Dendritic cell treated with granulocyte-macrophage colony-stimulating factor and Interleukin-4, amounts not matched to agents 40 ng/mL and 50 ng/mL, for 4 days (primary cell): ENCODE measurements at regions of chr1 and their contacts with region 1.

Region 1: GRCh38 chr1:155084722-155085503 is 6.3 kb downstream of the EFNA3 start:
- H3K4me3 Mint-ChIP-seq: peak overlapping the region; percentile 96
- H3K27ac Mint-ChIP-seq: peak overlapping the region; percentile 98
- H3K4me1 Mint-ChIP-seq: peaks cover 59% of the 10 kb centered on the region
- H3K27me3 Mint-ChIP-seq: peaks cover 50% of the 10 kb centered on the region

Region 2: GRCh38 chr1:154639876-154640275 is 445.0 kb before region 1 on chr1:
- intact Hi-C with region 1: no loop called
- H3K4me3 Mint-ChIP-seq: no peak overlapping the region
- H3K27ac Mint-ChIP-seq: no peak overlapping the region
- H3K4me1 Mint-ChIP-seq: no peaks in the 10 kb centered on the region
- H3K27me3 Mint-ChIP-seq: peaks cover 17% of the 10 kb centered on the region

Region 3: DNA sequence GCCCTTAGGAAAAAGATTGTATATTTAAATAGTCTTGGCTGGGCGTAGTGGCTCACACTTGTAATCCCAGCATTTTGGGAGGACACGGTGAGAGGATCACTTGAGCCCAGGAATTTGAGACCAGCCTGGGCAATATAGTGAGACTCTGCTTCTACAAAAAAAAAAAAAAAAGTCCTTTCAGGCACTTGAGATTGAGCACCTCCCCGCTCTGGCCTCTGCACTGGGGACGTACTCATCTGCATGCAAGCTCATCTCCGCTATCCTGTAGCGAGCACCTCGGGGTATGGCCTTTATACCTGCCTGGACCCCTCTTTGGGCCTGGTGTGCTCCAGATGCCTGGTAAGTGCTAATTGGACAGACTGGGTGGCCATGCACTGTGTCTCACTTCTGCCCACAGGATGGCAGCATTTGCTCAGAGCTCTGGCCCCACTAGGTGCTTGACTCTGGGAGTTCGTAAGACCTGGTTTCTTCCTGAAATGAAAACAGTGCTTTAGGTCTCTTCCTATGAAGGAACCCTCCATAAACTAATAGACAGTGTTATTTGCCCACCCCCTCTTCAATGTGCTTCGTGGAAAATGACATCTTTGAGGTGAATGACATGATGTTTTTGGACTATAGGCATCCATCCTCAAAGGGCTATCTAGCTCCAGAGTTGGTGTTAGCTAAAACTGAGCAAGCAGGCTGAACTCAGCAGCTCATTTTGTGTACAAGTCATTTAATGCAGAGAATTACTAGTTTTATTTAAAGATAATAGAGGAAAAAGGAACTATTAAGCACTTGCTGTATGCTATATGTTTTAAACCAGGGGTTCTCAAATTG is 415.2 kb before region 1 on chr1:
- intact Hi-C with region 1: loop called (anchors 5 kb)
- H3K4me3 Mint-ChIP-seq: no peak overlapping the region
- H3K27ac Mint-ChIP-seq: no peak overlapping the region
- H3K4me1 Mint-ChIP-seq: peaks cover 2% of the 10 kb centered on the region
- H3K27me3 Mint-ChIP-seq: peaks cover 5% of the 10 kb centered on the region

Region 4: GRCh38 chr1:154961497-154962262 is 123.2 kb before region 1 on chr1 and contains the start of gene PYGO2:
- intact Hi-C with region 1: loop called (anchors 10 kb)
- H3K4me3 Mint-ChIP-seq: peak within 1 kb of the TSS; percentile 87
- H3K27ac Mint-ChIP-seq: peak within 1 kb of the TSS; percentile 90
- H3K4me1 Mint-ChIP-seq: peaks cover 61% of the 10 kb centered on the region
- H3K27me3 Mint-ChIP-seq: no peaks in the 10 kb centered on the region

Region 5: DNA sequence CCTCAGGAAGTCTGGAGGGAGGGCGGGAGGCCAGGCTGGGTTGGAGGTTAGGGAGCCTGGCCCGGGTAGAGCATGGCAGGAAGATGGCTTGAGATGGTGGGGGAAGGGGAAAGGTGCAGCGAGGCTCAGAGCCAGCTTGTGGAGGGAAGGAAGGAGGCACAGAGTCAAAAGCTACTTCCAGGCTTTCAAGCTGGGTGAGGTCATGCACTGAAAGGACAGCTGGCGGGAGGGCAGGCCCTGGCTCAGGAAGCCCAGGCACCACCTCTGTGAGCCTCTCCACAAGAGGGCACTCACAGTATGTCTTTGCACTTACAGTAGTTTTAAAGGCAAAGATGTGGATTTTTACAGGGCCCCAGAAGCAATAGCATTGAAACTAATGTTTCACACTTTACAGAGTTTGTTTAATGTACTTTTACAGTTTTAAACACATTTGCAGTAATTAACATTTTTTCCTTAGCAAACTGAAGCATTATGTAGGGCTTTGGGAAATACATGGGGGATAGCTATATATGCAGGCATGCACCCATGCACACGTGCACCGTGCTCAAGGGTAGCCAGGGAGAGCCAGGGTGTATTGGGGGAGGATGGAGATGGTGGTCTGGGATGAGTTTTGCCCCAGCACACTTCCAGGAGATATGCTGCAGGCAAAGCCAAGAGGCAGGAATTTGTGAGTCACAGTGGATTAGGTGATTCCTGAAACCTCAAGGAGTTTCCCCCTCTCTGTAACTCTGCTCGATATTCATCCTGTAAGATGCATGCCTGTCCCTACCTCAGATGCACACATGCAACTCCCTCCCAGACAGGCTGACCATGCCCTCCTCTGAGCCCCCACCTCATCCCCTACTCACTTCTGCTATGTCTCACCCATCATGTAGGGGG is 39.9 kb before region 1 on chr1:
- intact Hi-C with region 1: loop called (anchors 1 kb)
- H3K4me3 Mint-ChIP-seq: no peak overlapping the region
- H3K27ac Mint-ChIP-seq: peak overlapping the region; percentile 42
- H3K4me1 Mint-ChIP-seq: peaks cover 26% of the 10 kb centered on the region
- H3K27me3 Mint-ChIP-seq: peaks cover 21% of the 10 kb centered on the region

Region 6: DNA sequence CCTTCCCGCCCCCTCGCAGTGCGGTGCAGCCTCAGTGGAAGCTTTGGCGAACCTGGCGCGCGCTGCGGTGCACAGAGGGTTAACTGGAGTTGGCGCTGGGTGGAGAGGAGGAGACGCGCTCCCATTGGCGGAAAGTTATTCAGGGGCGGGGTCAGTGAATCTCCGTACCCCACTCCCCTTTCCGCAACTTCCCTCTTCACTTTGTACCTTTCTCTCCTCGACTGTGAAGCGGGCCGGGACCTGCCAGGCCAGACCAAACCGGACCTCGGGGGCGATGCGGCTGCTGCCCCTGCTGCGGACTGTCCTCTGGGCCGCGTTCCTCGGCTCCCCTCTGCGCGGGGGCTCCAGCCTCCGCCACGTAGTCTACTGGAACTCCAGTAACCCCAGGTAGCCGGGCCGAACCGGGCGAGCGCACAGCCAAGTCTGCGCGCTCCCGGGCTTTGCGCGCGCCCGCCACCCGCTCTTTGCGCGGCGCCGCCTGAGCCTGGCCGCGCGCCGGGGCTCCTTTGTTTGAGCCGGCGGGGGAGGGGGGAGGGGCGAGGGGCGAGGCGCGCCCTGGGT is 21.3 kb before region 1 on chr1 and contains the start of gene EFNA4:
- intact Hi-C with region 1: loop called (anchors 1 kb)
- H3K4me3 Mint-ChIP-seq: peak within 1 kb of the TSS; percentile 84
- H3K27ac Mint-ChIP-seq: peak within 1 kb of the TSS; percentile 68
- H3K4me1 Mint-ChIP-seq: peaks cover 72% of the 10 kb centered on the region
- H3K27me3 Mint-ChIP-seq: peaks cover 15% of the 10 kb centered on the region

Region 7: GRCh38 chr1:155070721-155071569 is 14.0 kb before region 1 on chr1:
- intact Hi-C with region 1: loop called (anchors 2 kb)
- H3K4me3 Mint-ChIP-seq: peak overlapping the region; percentile 49
- H3K27ac Mint-ChIP-seq: peak overlapping the region; percentile 87
- H3K4me1 Mint-ChIP-seq: peaks cover 46% of the 10 kb centered on the region
- H3K27me3 Mint-ChIP-seq: peaks cover 32% of the 10 kb centered on the region